Natural killer cell (primary cell): ENCODE measurements at regions of chr3 and their contacts with region 1.

Region 1: DNA sequence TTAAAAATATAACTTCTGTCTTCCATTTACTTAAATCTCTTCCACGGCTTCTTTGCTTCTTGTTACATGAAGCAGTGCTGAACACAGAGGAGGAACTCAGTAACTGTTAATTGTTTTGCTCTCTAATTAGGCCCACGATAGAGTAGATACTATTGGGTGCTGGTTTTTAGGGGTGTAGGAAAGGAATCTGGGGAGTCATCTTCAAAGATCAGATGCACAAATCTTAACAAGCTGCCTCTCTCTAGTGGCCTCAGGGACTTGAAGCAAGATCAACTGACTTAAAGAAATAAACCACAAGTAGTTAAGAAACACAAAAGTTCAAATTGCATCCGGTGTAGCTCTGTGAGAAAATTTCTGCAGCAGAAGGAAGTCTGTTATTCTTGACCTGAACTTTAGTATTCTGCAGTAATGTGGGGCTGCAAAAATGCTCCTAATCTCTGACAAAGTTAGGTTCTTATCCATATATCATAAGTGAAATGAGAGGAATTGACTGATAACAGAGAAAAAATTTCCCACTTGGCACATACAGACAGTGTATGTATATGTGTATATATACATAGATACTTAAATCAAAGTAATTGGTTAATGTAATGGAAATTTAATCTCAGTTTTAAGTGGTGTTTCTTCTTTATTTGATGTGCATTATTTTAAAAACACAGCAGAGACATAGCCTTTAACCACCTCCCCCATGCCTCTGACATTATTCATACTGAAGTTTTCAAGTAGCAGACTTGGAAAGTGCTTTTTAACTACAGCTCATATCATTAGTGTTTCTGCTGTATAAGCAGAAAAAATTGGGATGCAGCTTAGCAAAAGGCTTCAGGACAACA is 51.8 kb downstream of the CHST2 start:
- DNase-seq: peak in 1 of 2 donors; percentile 55
- ATAC-seq: peak; percentile 50 to 78 (median 71)
- H3K4me3 ChIP-seq: no peak overlapping the region
- H3K4me3 Mint-ChIP-seq: peak overlapping the region; percentile 84
- H3K27ac ChIP-seq: peak overlapping the region; percentile 78
- H3K27ac Mint-ChIP-seq: peak overlapping the region; percentile 93 to 96
- H3K4me1 ChIP-seq: peaks cover 53% of the 10 kb centered on the region
- H3K4me1 Mint-ChIP-seq: peaks cover 88 to 91% of the 10 kb centered on the region in 2 donors
- H3K27me3 ChIP-seq: no peaks in the 10 kb centered on the region
- H3K27me3 Mint-ChIP-seq: no peaks in the 10 kb centered on the region
- CTCF ChIP-seq: no peak

Region 2: GRCh38 chr3:143182866-143183664 is 11.7 kb after region 1 on chr3:
- intact Hi-C with region 1: loop called (anchors 2 kb)
- DNase-seq: no peak
- ATAC-seq: peak; percentile 60 to 72 (median 63)
- H3K4me3 ChIP-seq: no peak overlapping the region
- H3K4me3 Mint-ChIP-seq: peak overlapping the region; percentile 64
- H3K27ac ChIP-seq: peak overlapping the region; percentile 68
- H3K27ac Mint-ChIP-seq: no peak overlapping the region
- H3K4me1 ChIP-seq: peaks cover 11% of the 10 kb centered on the region
- H3K4me1 Mint-ChIP-seq: peaks cover 29 to 34% of the 10 kb centered on the region in 2 donors
- H3K27me3 ChIP-seq: no peaks in the 10 kb centered on the region
- H3K27me3 Mint-ChIP-seq: no peaks in the 10 kb centered on the region
- CTCF ChIP-seq: no peak

Region 3: DNA sequence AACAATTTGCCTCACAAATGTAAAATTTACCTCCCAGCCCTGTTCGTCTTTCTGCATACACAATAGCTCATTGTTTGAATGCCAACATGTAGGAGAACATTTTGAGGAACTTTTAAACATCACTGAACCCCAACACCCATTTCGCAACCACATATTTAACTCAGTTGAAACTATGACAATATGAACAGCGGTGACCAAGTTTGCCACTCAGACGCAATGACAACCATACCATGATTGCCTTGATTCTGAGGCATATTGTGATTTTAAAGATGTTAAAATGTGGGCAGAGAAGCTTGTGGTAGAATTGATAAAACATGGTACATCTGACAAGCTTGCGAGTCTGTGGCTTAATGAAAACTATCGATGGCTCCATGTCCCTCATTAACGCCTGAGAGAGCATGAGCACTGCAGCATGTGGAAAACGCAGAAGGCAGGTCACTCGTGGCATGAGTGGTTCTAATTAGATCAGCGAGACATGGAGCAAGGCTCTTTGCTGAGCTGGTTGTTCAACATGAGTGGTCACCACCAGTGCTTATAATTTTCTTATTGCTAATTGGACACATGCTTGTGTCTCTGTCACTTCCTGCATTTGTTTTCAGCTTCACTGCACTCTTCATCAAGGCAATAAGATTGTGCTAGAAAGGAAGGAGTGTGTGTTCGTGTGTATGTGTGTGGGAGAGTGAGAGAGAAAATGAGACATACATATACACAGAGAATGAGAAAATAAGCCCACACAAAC is 65.0 kb after region 1 on chr3:
- intact Hi-C with region 1: loop called (anchors 2 kb)
- DNase-seq: no peak
- ATAC-seq: peak; percentile 54 to 66 (median 58)
- H3K4me3 ChIP-seq: no peak overlapping the region
- H3K4me3 Mint-ChIP-seq: peak overlapping the region; percentile 64
- H3K27ac ChIP-seq: peak overlapping the region; percentile 88
- H3K27ac Mint-ChIP-seq: peak overlapping the region; percentile 92 to 98
- H3K4me1 ChIP-seq: peaks cover 40% of the 10 kb centered on the region
- H3K4me1 Mint-ChIP-seq: peaks cover 72 to 78% of the 10 kb centered on the region in 2 donors
- H3K27me3 ChIP-seq: no peaks in the 10 kb centered on the region
- H3K27me3 Mint-ChIP-seq: no peaks in the 10 kb centered on the region
- CTCF ChIP-seq: no peak

Region 4: DNA sequence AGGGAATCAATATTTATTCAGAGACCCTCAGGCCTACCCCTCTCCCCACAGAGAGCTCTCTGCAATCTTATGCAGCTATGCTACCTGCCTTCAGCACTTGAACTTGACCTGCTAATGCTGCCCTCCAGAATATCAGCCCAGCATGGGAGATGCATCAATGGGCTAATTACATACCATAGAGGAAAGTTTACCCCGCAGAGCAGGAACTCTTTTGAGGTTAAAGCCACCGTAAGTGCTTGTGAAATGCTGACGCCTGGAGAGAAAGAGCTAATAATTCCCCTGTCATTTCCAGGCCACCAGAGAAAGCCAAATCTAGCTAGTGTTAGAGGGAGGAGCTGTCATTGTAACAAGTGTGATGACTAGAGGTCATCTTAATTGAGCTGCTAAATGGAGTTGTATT is 75.7 kb after region 1 on chr3:
- intact Hi-C with region 1: loop called (anchors 2 kb)
- DNase-seq: peak in 1 of 2 donors; percentile 9
- ATAC-seq: peak; percentile 89 to 96 (median 93)
- H3K4me3 ChIP-seq: no peak overlapping the region
- H3K4me3 Mint-ChIP-seq: peak overlapping the region; percentile 78
- H3K27ac ChIP-seq: peak overlapping the region; percentile 75
- H3K27ac Mint-ChIP-seq: peak overlapping the region; percentile 80 to 88
- H3K4me1 ChIP-seq: peaks cover 26% of the 10 kb centered on the region
- H3K4me1 Mint-ChIP-seq: peaks cover 70 to 71% of the 10 kb centered on the region in 2 donors
- H3K27me3 ChIP-seq: no peaks in the 10 kb centered on the region
- H3K27me3 Mint-ChIP-seq: no peaks in the 10 kb centered on the region
- CTCF ChIP-seq: no peak

Region 5: GRCh38 chr3:143276592-143276991 is 105.2 kb after region 1 on chr3:
- intact Hi-C with region 1: loop called (anchors 5 kb)
- DNase-seq: no peak
- ATAC-seq: no peak
- H3K4me3 ChIP-seq: no peak overlapping the region
- H3K4me3 Mint-ChIP-seq: peak overlapping the region; percentile 68
- H3K27ac ChIP-seq: no peak overlapping the region
- H3K27ac Mint-ChIP-seq: peak overlapping the region; percentile 17 to 62
- H3K4me1 ChIP-seq: peaks cover 49% of the 10 kb centered on the region
- H3K4me1 Mint-ChIP-seq: peaks cover 72 to 84% of the 10 kb centered on the region in 2 donors
- H3K27me3 ChIP-seq: no peaks in the 10 kb centered on the region
- H3K27me3 Mint-ChIP-seq: no peaks in the 10 kb centered on the region
- CTCF ChIP-seq: no peak